Activated CD4-positive, alpha-beta T cell treated with anti-CD3 and anti-CD28 coated beads for 36 hours (primary cell): ENCODE measurements at regions of chr5 and their contacts with region 1.

Region 1: DNA sequence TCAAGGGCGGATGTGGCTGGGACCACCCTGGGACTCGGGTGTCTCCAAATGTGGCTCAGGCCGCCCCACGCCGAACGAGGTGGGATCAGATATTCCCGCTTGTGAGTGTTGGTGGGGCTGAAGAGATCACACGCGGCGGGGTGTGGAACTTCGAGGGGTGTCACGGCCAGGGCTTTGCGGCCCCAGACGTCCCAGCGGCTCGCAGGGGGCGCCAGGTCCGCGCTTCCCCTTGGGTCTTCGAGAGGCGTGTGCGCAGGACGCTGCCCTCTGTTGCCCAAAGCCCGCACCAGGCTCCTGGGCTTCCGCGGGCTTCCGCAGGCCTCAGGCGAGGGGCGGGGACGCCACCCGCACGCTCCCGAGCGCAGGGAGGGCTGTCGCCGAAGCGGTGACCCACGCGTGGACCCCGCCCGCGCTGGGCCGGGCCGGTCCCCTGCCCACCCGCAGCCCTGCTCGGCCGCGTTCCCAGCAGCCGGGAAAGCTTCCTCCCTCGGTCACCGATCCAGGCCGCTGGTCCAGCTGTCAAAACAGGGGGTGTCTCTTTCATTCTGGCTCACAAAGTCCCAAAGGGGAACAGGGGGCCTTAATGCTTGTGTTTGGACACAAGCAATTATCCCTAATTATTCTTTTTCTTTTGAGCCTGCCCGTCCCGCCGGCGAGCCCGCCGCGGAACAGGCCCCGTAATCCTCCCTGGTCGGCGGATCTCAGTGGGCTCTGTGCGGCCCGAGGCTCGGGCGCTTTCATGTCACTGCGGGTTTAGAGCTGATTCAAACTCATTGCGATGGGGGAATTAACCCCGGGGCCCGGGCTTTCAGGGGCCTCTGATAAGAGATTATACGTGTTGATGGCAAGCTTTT is 60.6 kb downstream of the TMEM174 start:
- DNase-seq: peak; percentile 23
- ATAC-seq: no peak
- H3K4me3 Mint-ChIP-seq: peak overlapping the region; percentile 10
- H3K27ac Mint-ChIP-seq: no peak overlapping the region
- H3K4me1 Mint-ChIP-seq: peaks cover 28% of the 10 kb centered on the region
- H3K27me3 Mint-ChIP-seq: peaks cover 62% of the 10 kb centered on the region

Region 2: GRCh38 chr5:73215891-73216610 is 17.5 kb before region 1 on chr5:
- CTCF ChIA-PET with region 1: interaction called, 13 read pairs
- POLR2A ChIA-PET with region 1: no interaction called
- intact Hi-C with region 1: no loop called
- DNase-seq: peak; percentile 84
- ATAC-seq: peak; percentile 82
- H3K4me3 Mint-ChIP-seq: no peak overlapping the region
- H3K27ac Mint-ChIP-seq: no peak overlapping the region
- H3K4me1 Mint-ChIP-seq: peaks cover 14% of the 10 kb centered on the region
- H3K27me3 Mint-ChIP-seq: peaks cover 76% of the 10 kb centered on the region

Region 3: DNA sequence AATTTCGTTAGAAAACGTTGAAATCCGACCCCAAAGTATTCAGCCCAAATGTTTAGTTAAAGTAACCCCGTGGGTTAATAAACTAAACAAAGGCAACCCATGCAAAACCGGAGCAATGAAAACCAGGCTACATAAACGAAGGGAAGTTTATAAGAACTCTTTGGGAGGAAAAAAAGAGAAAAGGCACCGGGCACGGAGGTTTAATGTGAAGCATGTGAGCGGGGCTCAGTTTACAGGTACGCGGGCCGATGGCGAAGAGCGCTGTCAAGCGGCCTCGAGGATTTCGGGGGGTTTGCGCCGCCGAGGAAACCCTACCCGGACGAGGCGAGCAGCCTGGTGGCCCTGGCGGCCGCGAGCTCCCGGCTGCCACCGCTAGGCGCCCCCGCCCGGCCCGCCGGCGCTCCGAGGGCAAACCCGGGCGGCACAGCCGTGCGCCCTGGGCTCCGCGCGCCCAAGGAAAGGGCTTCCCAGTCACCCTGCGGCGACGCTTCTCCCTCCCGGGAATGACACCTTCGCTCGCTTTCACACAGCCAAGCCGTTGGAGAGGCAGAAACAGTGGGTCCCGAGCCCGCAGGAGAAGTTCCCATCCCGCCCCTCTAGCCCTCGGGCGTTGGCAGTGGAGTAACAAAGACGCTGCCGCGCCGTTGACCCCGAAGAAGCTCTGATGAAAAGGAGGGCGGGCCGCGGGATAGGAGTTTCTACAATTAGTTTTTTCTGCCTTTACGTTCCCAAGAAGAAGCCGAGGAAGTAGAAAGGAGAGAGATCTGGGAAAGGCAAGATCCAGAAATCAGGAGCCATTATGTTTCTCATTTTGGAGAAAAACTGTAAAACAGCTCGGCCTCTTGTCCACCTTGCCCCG is 65.4 kb after region 1 on chr5:
- CTCF ChIA-PET with region 1: no interaction called
- POLR2A ChIA-PET with region 1: no interaction called
- intact Hi-C with region 1: loop called (anchors 2 to 5 kb)
- DNase-seq: peak; percentile 47
- ATAC-seq: no peak
- H3K4me3 Mint-ChIP-seq: no peak overlapping the region
- H3K27ac Mint-ChIP-seq: no peak overlapping the region
- H3K4me1 Mint-ChIP-seq: peaks cover 18% of the 10 kb centered on the region
- H3K27me3 Mint-ChIP-seq: peaks cover 83% of the 10 kb centered on the region

Region 4: DNA sequence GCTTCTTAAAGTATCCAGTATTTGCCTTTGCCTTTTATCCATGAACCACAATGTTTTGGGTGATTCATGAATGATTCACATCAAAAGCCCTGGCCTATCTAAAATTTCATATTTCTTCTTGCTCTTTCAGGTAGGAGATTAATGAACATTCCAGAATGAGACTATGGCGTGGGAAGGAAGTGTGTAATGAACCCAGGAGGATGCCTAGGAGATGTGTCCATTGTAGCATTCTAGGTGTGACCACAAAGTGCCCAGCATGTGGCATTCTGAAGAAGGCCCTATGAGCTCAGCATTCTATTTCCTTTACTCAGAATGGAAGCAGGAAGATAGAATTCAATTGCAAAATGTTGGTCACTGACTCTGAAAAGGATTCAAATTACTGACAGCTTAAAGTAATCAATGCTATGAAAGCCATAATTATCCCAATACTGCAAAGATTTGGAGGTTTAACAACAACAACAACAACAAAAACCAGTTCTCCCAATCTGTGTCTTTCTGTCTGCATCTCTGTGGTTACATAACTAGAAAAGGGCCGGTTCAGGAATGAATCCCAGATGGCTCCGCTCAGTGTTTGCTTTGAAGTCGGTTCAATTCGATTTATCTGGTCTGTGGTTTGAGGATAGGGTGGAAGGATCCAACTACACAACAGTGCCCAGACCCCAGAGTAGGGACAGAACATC is 88.3 kb after region 1 on chr5:
- CTCF ChIA-PET with region 1: no interaction called
- POLR2A ChIA-PET with region 1: no interaction called
- intact Hi-C with region 1: no loop called
- DNase-seq: no peak
- ATAC-seq: no peak
- H3K4me3 Mint-ChIP-seq: no peak overlapping the region
- H3K27ac Mint-ChIP-seq: no peak overlapping the region
- H3K4me1 Mint-ChIP-seq: no peaks in the 10 kb centered on the region
- H3K27me3 Mint-ChIP-seq: peaks cover 50% of the 10 kb centered on the region

Region 5: GRCh38 chr5:73381590-73382400 is 148.2 kb after region 1 on chr5:
- CTCF ChIA-PET with region 1: no interaction called
- POLR2A ChIA-PET with region 1: no interaction called
- intact Hi-C with region 1: loop called in 1 of 2 experiments (anchors 5 kb)
- DNase-seq: peak; percentile 28
- ATAC-seq: no peak
- H3K4me3 Mint-ChIP-seq: no peak overlapping the region
- H3K27ac Mint-ChIP-seq: no peak overlapping the region
- H3K4me1 Mint-ChIP-seq: peaks cover 15% of the 10 kb centered on the region
- H3K27me3 Mint-ChIP-seq: peaks cover 66% of the 10 kb centered on the region

Region 6: DNA sequence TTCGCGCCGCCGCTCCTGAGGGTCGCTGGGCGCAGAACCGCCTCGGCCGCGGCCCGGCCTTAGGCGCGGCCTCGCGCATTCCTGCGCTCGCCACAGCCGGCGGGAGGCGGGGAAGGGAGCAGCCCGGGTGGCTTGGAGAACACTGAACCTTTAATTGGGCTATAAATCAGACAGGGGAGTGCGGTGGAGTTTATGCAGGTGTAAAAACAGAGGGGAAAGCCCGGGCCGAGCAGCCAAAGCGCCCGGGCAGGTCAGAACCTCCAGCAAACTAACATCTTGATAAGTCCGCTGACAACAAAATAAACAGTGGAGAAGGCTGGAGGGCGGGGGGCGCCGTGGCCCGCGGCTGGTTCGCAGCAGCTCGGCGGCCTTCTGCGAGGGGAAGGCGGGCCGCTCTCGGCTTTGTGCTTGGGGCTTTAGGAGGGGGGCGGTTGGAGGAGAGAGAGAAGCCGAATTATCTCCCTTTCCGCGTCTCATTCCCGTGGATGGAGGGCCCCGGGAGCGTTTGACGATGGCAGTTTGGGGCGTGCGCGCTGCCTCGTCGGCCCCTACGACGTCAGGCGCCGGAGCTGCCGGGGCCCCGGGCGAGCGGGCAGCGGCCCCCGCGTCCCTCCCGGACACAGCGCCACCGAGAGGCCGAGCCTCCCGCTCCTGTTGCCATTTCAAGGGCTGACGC is 203.7 kb after region 1 on chr5:
- CTCF ChIA-PET with region 1: no interaction called
- POLR2A ChIA-PET with region 1: no interaction called
- intact Hi-C with region 1: loop called in 1 of 2 experiments (anchors 5 kb)
- DNase-seq: peak; percentile 49
- ATAC-seq: peak; percentile 36
- H3K4me3 Mint-ChIP-seq: peak overlapping the region; percentile 30
- H3K27ac Mint-ChIP-seq: no peak overlapping the region
- H3K4me1 Mint-ChIP-seq: peaks cover 12% of the 10 kb centered on the region
- H3K27me3 Mint-ChIP-seq: peaks cover 74% of the 10 kb centered on the region

Region 7: DNA sequence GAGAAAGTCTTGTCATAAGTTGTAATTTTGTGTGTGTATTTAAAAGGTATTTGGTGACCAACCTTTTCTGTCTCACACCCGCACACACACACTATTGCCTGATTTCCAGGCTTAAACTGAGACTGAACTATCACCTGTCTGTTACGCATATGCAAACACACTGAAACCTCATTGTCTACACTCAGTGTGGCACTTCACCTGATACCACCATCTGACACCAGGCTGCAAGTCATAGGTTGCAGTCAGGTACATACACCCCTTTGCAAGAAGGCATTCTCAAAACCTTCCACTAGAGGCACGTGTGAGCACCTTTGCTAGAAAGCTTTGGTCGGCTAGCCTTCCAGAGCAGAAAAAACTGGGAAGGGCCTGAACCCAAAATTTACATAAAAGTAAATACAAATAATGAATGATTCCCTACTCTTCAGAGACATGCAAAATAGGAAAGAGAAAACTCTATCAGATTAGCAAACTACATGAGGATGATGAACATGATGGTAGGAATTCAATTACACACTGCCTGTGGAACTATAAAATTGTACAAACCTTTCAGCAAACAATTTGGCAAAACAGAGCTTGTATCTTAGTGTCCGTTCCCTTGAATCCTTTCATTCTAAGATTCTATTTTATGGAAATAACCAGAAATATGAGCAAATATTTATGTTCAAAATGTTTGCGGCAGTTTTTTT is 220.9 kb after region 1 on chr5:
- CTCF ChIA-PET with region 1: no interaction called
- POLR2A ChIA-PET with region 1: no interaction called
- intact Hi-C with region 1: loop called (anchors 2 to 5 kb)
- DNase-seq: peak; percentile 53
- ATAC-seq: peak; percentile 78
- H3K4me3 Mint-ChIP-seq: no peak overlapping the region
- H3K27ac Mint-ChIP-seq: no peak overlapping the region
- H3K4me1 Mint-ChIP-seq: no peaks in the 10 kb centered on the region
- H3K27me3 Mint-ChIP-seq: peaks cover 61% of the 10 kb centered on the region